ENCODE measurements at regions of chr16 and their contacts with region 1.

Region 1: GRCh38 chr16:5234295-5235050 is 136.9 kb upstream of the EEF2KMT start:
- DNase-seq: no peak
- ATAC-seq: no peak
- H3K4me3 ChIP-seq: no peak overlapping the region
- H3K27ac ChIP-seq: no peak overlapping the region
- H3K4me1 ChIP-seq: no peaks in the 10 kb centered on the region
- H3K27me3 ChIP-seq: peaks cover 0 to 2% of the 10 kb centered on the region in 2 donors

Region 2: DNA sequence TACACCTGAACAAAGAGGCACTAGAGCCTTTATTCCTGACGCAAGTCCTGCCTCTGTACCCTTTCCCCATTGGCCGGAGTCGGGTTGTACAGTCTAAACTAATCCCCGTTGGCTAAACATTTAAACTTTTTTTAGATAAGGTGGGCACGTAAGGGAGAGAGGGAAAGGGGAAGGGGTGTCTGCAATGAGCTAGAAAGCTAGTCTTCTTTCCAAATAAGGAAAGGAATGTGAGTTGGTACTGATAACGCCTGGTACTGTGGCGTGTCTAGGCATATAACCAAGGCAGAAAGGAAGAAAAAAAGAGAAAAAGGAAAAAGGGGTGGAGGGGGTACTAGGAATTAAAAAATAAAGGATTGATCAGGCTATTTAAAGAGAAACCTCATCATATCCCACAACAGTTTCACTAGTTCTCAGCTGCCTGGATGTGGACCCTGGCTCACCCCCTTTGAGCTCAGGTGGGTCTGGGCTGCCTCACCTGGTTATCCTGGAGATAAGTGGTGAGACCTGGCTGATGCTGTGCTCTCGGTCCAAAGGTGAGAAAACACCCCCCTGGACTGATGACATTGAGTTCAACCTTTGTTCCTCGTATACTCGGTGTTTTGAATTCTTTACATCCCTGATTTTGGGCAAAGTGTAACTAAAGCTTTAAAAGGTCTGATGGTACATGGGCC is 46.0 kb before region 1 on chr16:
- intact Hi-C with region 1: no loop called
- DNase-seq: no peak
- ATAC-seq: no peak
- H3K4me3 ChIP-seq: no peak overlapping the region
- H3K27ac ChIP-seq: no peak overlapping the region
- H3K4me1 ChIP-seq: no peaks in the 10 kb centered on the region
- H3K27me3 ChIP-seq: no peaks in the 10 kb centered on the region

Region 3: DNA sequence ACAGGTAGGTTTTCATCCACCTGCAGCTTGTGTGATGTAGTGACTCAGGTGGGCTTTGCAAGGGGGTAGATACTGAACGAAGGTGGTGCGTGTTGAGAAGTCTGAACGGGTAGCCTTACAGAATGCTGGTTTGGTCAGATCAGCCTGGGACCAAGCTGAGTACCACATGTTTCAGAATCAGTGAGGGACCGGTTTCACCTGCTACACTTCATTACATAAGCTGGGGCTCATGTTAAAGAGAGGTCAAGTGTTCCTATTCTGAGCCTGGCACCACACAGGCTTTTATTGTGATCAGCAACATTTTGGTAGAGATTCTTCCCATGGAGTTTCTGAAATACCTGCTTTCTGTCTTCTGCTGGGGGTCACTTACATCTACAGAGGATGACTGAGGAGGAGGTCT is 70.5 kb after region 1 on chr16:
- intact Hi-C with region 1: no loop called
- DNase-seq: no peak
- ATAC-seq: no peak
- H3K4me3 ChIP-seq: no peak overlapping the region
- H3K27ac ChIP-seq: no peak overlapping the region
- H3K4me1 ChIP-seq: no peaks in the 10 kb centered on the region
- H3K27me3 ChIP-seq: no peaks in the 10 kb centered on the region

Region 4: GRCh38 chr16:5615868-5616642 is 381.6 kb after region 1 on chr16:
- intact Hi-C with region 1: loop called (anchors 5 to 10 kb)
- DNase-seq: peak; percentile 44 to 79
- ATAC-seq: no peak
- H3K4me3 ChIP-seq: no peak overlapping the region
- H3K27ac ChIP-seq: no peak overlapping the region
- H3K4me1 ChIP-seq: no peaks in the 10 kb centered on the region
- H3K27me3 ChIP-seq: no peaks in the 10 kb centered on the region

Region 5: GRCh38 chr16:6258056-6258455 is 1023.6 kb after region 1 on chr16:
- intact Hi-C with region 1: no loop called
- DNase-seq: no peak
- ATAC-seq: no peak
- H3K4me3 ChIP-seq: no peak overlapping the region
- H3K27ac ChIP-seq: no peak overlapping the region
- H3K4me1 ChIP-seq: no peaks in the 10 kb centered on the region
- H3K27me3 ChIP-seq: no peaks in the 10 kb centered on the region

Region 6: GRCh38 chr16:6643080-6643686 is 1408.7 kb after region 1 on chr16:
- intact Hi-C with region 1: loop called (anchors 5 to 10 kb)
- DNase-seq: peak in 1 of 2 donors; percentile 50
- ATAC-seq: no peak
- H3K4me3 ChIP-seq: no peak overlapping the region
- H3K27ac ChIP-seq: no peak overlapping the region
- H3K4me1 ChIP-seq: no peaks in the 10 kb centered on the region
- H3K27me3 ChIP-seq: no peaks in the 10 kb centered on the region